T-cell (primary cell): ENCODE measurements at regions of chr3 and their contacts with region 1.

Region 1: GRCh38 chr3:9452417-9452816 is 55.0 kb downstream of the SETD5 start:
- DNase-seq: peak in 1 of 35 experiments; percentile 39
- ATAC-seq: peak in 1 of 4 experiments; percentile 63
- H3K4me3 ChIP-seq: no peak overlapping the region
- H3K4me3 Mint-ChIP-seq: peak overlapping the region in 2 of 3 donors; percentile 13 to 18
- H3K27ac ChIP-seq: peak overlapping the region; percentile 39
- H3K27ac Mint-ChIP-seq: peak overlapping the region; percentile 59 to 89
- H3K4me1 ChIP-seq: peaks cover 0 to 4% of the 10 kb centered on the region in 2 experiments
- H3K4me1 Mint-ChIP-seq: peaks cover 15 to 31% (median 23%) of the 10 kb centered on the region in 3 donors
- H3K27me3 ChIP-seq: no peaks in the 10 kb centered on the region
- H3K27me3 Mint-ChIP-seq: no peaks in the 10 kb centered on the region

Region 2: DNA sequence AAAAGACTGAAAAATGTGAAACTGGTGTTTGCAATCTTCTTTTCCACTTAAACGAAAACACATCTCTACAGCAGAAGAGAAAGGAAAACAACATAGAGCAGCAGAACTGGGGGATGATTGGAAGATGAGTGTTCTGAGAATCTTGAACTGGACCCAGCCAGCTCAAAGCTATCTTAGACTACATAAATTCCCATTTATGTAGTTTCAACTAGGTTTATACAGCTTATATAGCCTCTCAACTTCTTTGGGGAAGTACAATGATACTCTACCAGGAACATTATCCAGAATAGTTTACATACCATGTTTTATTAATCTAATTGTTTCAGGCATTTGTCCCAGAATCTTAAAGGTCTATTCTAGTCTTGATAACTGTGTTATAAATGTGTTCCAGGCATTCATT is 1609.0 kb before region 1 on chr3:
- CTCF ChIA-PET with region 1: no interaction called
- POLR2A ChIA-PET with region 1: no interaction called
- DNase-seq: no peak
- ATAC-seq: no peak
- H3K4me3 ChIP-seq: no peak overlapping the region
- H3K4me3 Mint-ChIP-seq: no peak overlapping the region
- H3K27ac ChIP-seq: no peak overlapping the region
- H3K27ac Mint-ChIP-seq: no peak overlapping the region
- H3K4me1 ChIP-seq: no peaks in the 10 kb centered on the region
- H3K4me1 Mint-ChIP-seq: peaks cover 0 to 5% (median 3%) of the 10 kb centered on the region in 3 donors
- H3K27me3 ChIP-seq: no peaks in the 10 kb centered on the region
- H3K27me3 Mint-ChIP-seq: no peaks in the 10 kb centered on the region

Region 3: DNA sequence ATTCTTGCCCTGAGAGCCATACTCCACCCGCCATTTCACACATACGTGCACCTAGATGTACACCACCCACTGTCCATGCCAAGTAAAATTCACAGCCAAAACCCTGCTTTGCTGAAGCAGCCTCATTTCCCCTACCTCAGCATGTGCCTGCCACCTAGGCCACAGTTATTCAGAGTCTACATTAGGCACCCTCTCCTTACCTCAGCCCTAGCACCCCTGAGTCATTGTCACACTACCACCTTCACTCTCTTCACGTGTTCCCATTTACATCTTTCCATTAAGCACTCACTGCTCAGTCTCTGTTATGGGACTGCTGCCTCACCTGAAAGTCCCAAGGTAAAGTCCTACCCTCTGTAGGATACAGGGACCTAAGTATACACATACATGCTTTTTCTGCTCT is 15.0 kb after region 1 on chr3:
- CTCF ChIA-PET with region 1: no interaction called
- POLR2A ChIA-PET with region 1: interaction called, 4 to 13 read pairs
- DNase-seq: no peak
- ATAC-seq: no peak
- H3K4me3 ChIP-seq: no peak overlapping the region
- H3K4me3 Mint-ChIP-seq: no peak overlapping the region
- H3K27ac ChIP-seq: no peak overlapping the region
- H3K27ac Mint-ChIP-seq: no peak overlapping the region
- H3K4me1 ChIP-seq: no peaks in the 10 kb centered on the region
- H3K4me1 Mint-ChIP-seq: peaks cover 0 to 1% (median 0%) of the 10 kb centered on the region in 3 donors
- H3K27me3 ChIP-seq: no peaks in the 10 kb centered on the region
- H3K27me3 Mint-ChIP-seq: no peaks in the 10 kb centered on the region

Region 4: GRCh38 chr3:9500108-9501050 is 48.0 kb after region 1 on chr3:
- CTCF ChIA-PET with region 1: no interaction called
- POLR2A ChIA-PET with region 1: no interaction called
- DNase-seq: peak in 34 of 35 experiments; percentile 8 to 72 (median 53)
- ATAC-seq: peak; percentile 56 to 77 (median 64)
- H3K4me3 ChIP-seq: no peak overlapping the region
- H3K4me3 Mint-ChIP-seq: peak overlapping the region in 1 of 3 donors; percentile 44
- H3K27ac ChIP-seq: no peak overlapping the region
- H3K27ac Mint-ChIP-seq: no peak overlapping the region
- H3K4me1 ChIP-seq: peaks cover 0 to 17% of the 10 kb centered on the region in 2 experiments
- H3K4me1 Mint-ChIP-seq: peaks cover 8 to 15% (median 10%) of the 10 kb centered on the region in 3 donors
- H3K27me3 ChIP-seq: peaks cover 0 to 53% of the 10 kb centered on the region in 2 experiments
- H3K27me3 Mint-ChIP-seq: peaks cover 26 to 36% of the 10 kb centered on the region in 2 donors

Region 5: GRCh38 chr3:10041034-10041433 is 588.6 kb after region 1 on chr3:
- CTCF ChIA-PET with region 1: no interaction called
- POLR2A ChIA-PET with region 1: no interaction called
- DNase-seq: no peak
- ATAC-seq: no peak
- H3K4me3 ChIP-seq: no peak overlapping the region
- H3K4me3 Mint-ChIP-seq: no peak overlapping the region
- H3K27ac ChIP-seq: no peak overlapping the region
- H3K27ac Mint-ChIP-seq: no peak overlapping the region
- H3K4me1 ChIP-seq: no peaks in the 10 kb centered on the region
- H3K4me1 Mint-ChIP-seq: no peaks in the 10 kb centered on the region
- H3K27me3 ChIP-seq: no peaks in the 10 kb centered on the region
- H3K27me3 Mint-ChIP-seq: no peaks in the 10 kb centered on the region